H1 (cell line): ENCODE measurements at regions of chr5 and their contacts with region 1.

Region 1: DNA sequence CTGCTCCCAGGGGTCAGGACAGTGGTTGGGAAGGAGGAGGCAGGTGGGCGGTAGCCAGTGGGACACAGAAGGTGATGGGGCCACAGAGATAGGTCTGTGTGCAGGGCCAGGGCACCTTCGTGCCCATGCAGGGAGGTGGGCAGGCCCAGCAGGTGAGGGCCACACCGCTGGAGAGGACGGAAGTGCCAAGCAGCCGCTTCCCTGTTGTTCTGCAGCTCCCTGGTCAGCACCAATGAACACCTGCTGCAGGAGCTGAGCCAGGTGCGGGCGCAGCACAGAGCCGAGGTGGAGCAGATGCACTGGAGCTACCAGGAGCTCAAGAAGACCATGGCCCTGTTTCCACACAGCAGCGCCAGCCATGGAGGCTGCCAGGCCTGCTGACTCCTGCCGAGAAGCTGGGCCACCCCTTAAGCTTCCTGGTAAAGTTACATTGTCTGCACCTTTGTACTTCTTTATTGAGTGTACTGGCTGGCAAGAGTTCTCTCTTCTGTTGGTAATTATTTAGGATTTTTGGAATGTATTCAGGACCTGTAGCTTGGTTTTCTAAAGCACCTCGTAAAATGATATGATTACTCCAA is 40.3 kb downstream of the TPPP start:
- DNase-seq: peak in 1 of 2 experiments; percentile 35
- H3K4me3 ChIP-seq: no peak overlapping the region
- H3K27ac ChIP-seq: no peak overlapping the region
- H3K4me1 ChIP-seq: no peaks in the 10 kb centered on the region
- H3K27me3 ChIP-seq: no peaks in the 10 kb centered on the region; a peak in 1 of 7 replicates
- CTCF ChIP-seq: no peak
- EP300 ChIP-seq: no peak
- POLR2A ChIP-seq: no peak
- RAD21 ChIP-seq: no peak

Region 2: GRCh38 chr5:453711-454481 is 199.0 kb before region 1 on chr5:
- CTCF ChIA-PET with region 1: no interaction called
- POLR2A ChIA-PET with region 1: no interaction called
- DNase-seq: no peak
- H3K4me3 ChIP-seq: no peak overlapping the region
- H3K27ac ChIP-seq: no peak overlapping the region
- H3K4me1 ChIP-seq: peaks cover 2 to 7% (median 2%) of the 10 kb centered on the region in 4 experiments; a peak in 5 of 7 replicates
- H3K27me3 ChIP-seq: no peaks in the 10 kb centered on the region
- CTCF ChIP-seq: no peak
- EP300 ChIP-seq: no peak
- POLR2A ChIP-seq: no peak
- RAD21 ChIP-seq: no peak

Region 3: GRCh38 chr5:640461-641157 is 12.3 kb before region 1 on chr5:
- CTCF ChIA-PET with region 1: interaction called, 4 read pairs
- POLR2A ChIA-PET with region 1: interaction called, 12 read pairs
- DNase-seq: peak in 1 of 2 experiments; percentile 31
- H3K4me3 ChIP-seq: no peak overlapping the region
- H3K27ac ChIP-seq: no peak overlapping the region
- H3K4me1 ChIP-seq: no peaks in the 10 kb centered on the region
- H3K27me3 ChIP-seq: no peaks in the 10 kb centered on the region
- CTCF ChIP-seq: no peak
- EP300 ChIP-seq: no peak
- POLR2A ChIP-seq: no peak
- RAD21 ChIP-seq: no peak